ENCODE measurements at regions of chr18 and their contacts with region 1.

Region 1: DNA sequence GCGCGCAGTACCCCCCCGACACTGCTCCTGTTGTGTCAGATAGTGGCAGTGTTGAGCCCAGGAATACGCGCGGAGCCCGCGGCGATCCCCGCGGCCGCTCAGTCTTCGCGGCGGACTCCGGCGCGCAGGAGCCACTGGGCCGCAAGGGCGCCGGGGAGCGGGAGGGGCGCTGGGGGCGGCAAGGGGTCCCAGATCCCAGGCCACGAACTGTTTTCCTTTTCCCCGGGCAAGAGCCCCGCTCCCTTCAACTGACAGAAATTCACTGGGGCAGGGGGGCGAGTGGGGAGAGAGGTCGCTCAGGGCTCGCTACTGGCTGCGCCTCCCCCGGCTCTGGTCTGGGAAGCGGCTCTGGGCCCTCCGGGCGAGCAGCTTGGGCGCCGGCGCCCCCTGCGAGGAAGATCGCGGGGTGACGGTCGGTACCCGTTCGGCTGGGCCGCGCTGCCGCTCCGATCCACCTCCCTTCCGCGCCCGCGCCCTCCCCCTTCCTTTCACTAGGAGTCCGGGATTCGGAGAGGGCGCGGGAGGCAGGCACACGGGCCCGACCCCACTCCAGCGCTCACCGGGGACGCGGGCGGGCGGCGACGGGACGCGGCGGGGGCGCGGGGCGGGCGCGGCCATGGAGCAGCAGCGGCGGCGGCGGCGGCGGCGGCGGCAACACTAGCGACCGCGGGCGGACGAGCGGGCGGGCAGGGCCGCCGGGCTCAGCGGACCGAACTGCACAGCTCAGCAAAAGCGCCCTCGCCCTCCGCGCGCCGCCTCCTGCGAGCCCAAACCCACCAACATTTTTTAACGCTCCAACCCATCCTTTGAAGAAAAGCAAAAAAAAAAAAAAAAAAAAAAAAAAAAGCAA is 1.4 kb upstream of the SETBP1 start:
- DNase-seq: peak; percentile 92 to 93
- ATAC-seq: peak; percentile 94
- H3K4me3 ChIP-seq: peak overlapping the region; percentile 91 to 98
- H3K27ac ChIP-seq: peak overlapping the region; percentile 78 to 99
- H3K4me1 ChIP-seq: peaks cover 0 to 3% of the 10 kb centered on the region in 2 donors
- H3K27me3 ChIP-seq: no peaks in the 10 kb centered on the region

Region 2: DNA sequence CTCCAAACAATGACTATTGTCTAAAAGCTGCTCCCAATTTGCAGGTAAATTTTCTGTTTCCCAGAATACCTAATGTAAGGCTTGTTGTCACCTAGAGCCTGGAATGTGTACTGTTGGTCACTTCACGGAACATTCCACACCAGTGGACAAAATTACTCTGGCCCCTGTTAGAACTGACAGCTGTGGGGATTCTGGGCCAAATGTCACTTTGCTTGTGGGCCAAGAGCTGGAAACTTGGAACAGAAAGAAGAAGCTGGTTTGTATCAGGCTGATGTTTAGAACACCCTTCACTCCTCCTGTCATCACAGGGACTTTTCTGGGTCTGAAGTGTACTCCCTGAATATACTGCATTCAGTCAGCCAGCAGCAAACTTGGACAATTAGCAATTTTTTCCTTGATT is 906.4 kb before region 1 on chr18:
- intact Hi-C with region 1: no loop called
- DNase-seq: no peak
- ATAC-seq: no peak
- H3K4me3 ChIP-seq: no peak overlapping the region
- H3K27ac ChIP-seq: no peak overlapping the region
- H3K4me1 ChIP-seq: no peaks in the 10 kb centered on the region
- H3K27me3 ChIP-seq: no peaks in the 10 kb centered on the region

Region 3: DNA sequence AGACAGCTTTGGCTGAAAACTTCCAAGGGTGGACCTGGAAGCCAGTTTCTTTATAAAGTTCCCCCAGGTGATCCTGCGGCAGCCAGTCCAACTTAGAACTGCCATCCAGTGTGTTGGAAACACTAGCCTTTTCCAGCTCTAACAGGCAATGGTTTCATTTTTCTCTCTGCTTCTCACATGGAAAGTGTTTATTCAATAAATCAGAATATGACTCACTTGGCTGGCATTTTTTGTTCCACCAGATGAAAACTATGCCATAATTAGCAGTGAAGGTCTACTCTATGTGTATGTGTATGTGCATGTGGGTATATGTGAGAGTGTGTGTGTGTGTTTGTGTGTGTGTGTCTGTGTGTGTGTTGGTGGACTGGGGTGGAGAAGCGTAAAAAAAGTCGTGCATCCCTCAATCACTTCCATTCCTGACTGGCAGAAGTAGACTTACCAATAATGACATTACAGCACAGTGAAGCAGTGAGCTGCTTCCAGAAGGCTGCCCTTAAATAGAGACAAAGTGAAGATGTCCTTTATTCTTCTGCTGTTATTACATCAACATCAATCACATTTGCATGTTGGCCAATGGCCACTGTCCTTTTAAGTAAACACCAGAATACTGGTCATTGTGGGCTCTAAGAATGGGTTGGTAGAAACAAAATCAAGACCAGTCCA is 89.5 kb before region 1 on chr18:
- intact Hi-C with region 1: loop called (anchors 5 kb)
- DNase-seq: no peak
- ATAC-seq: peak; percentile 72
- H3K4me3 ChIP-seq: no peak overlapping the region
- H3K27ac ChIP-seq: peak overlapping the region in 1 of 2 donors; percentile 74
- H3K4me1 ChIP-seq: peaks cover 10 to 19% of the 10 kb centered on the region in 2 donors
- H3K27me3 ChIP-seq: no peaks in the 10 kb centered on the region

Region 4: GRCh38 chr18:44742704-44743311 is 63.5 kb after region 1 on chr18:
- intact Hi-C with region 1: loop called in 1 of 2 experiments (anchors 5 kb)
- DNase-seq: peak in 1 of 2 donors; percentile 64
- ATAC-seq: peak; percentile 63
- H3K4me3 ChIP-seq: no peak overlapping the region
- H3K27ac ChIP-seq: no peak overlapping the region
- H3K4me1 ChIP-seq: no peaks in the 10 kb centered on the region
- H3K27me3 ChIP-seq: no peaks in the 10 kb centered on the region

Region 5: DNA sequence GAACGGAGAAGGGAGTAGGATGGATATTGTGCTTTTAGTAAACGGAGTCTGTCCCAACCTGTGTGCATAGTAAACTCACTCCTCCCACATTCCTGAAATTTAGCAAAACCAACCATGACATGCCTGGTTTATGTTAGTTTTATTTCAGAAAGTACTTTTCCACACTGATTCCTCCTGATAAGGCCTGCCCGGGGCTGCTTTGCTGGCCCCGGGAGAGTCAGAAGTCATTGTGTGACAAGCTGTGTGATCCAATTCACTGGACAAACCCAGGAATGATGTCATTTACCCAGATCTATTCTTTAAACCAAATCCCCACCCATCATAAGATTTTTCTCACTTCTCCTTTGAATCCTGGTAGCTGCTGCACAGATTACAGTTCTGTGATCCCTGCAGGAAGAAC is 110.4 kb after region 1 on chr18:
- intact Hi-C with region 1: loop called (anchors 5 kb)
- DNase-seq: no peak
- ATAC-seq: peak; percentile 67
- H3K4me3 ChIP-seq: no peak overlapping the region
- H3K27ac ChIP-seq: peak overlapping the region in 1 of 2 donors; percentile 40
- H3K4me1 ChIP-seq: peaks cover 9 to 18% of the 10 kb centered on the region in 2 donors
- H3K27me3 ChIP-seq: no peaks in the 10 kb centered on the region

Region 6: GRCh38 chr18:44917216-44918141 is 238.2 kb after region 1 on chr18:
- intact Hi-C with region 1: loop called in 1 of 2 experiments (anchors 10 kb)
- DNase-seq: no peak
- ATAC-seq: peak; percentile 37
- H3K4me3 ChIP-seq: no peak overlapping the region
- H3K27ac ChIP-seq: peak overlapping the region; percentile 84 to 98
- H3K4me1 ChIP-seq: peaks cover 3 to 10% of the 10 kb centered on the region in 2 donors
- H3K27me3 ChIP-seq: no peaks in the 10 kb centered on the region

Region 7: DNA sequence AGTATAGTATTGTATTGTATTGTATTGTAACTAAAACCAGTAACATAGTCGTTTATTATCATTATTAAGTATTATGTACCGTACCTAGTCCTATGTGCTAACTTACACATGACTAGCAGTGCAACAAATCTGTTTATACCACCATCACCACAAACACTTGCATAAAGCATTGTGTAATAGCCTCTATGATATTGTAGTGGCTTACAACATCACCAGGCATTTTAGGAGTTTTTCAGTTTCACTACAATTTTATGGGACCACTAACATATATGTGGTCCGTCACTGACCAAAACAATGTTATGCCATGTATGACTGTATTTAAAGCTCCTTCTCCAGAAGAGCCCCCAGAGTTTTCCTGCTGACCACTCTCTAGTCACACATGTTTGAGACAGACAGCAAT is 307.7 kb after region 1 on chr18:
- intact Hi-C with region 1: no loop called
- DNase-seq: no peak
- ATAC-seq: no peak
- H3K4me3 ChIP-seq: no peak overlapping the region
- H3K27ac ChIP-seq: no peak overlapping the region
- H3K4me1 ChIP-seq: no peaks in the 10 kb centered on the region
- H3K27me3 ChIP-seq: no peaks in the 10 kb centered on the region

Region 8: DNA sequence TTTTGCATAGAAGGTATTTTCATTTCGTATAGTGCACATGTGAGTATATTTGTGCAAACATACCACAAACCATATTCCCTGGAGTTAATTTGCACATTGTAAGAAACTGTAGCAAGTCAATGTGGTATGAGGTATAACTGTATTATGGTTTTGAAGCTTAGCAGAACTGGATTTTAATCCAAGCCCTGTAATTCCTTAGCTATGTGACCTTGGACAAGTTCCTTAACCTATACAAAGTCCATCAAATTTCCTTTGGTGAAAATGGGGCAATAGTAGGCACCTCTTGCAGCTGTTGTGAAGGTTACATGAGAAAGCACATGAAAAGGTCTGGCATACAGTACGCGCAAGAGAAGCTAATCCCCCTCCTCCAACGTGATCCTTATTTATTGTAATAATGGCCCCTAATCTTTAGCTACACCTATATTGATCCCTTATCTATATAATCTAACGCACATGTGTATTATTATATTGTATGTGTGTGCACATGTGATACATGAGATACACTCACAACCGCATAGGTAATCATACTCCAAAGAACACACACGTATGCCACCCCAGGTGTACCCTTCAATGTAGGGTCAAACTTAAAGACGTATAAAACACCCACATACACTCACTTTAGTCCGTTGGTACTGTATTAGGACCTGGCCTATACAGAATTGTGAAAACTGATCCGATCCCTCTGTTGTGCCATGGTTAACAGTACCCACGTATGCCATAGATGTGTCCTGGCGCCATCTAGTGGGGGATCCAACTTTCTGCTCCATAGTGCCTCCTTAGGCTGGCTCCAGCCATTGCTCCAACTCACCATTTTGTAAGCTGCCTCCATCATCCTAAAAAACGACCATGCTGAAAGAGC is 533.1 kb after region 1 on chr18:
- intact Hi-C with region 1: loop called (anchors 10 kb)
- DNase-seq: peak; percentile 82 to 88
- ATAC-seq: peak; percentile 92
- H3K4me3 ChIP-seq: no peak overlapping the region
- H3K27ac ChIP-seq: no peak overlapping the region
- H3K4me1 ChIP-seq: no peaks in the 10 kb centered on the region
- H3K27me3 ChIP-seq: no peaks in the 10 kb centered on the region